ENCODE measurements at regions of chr10 and their contacts with region 1.

Region 1: DNA sequence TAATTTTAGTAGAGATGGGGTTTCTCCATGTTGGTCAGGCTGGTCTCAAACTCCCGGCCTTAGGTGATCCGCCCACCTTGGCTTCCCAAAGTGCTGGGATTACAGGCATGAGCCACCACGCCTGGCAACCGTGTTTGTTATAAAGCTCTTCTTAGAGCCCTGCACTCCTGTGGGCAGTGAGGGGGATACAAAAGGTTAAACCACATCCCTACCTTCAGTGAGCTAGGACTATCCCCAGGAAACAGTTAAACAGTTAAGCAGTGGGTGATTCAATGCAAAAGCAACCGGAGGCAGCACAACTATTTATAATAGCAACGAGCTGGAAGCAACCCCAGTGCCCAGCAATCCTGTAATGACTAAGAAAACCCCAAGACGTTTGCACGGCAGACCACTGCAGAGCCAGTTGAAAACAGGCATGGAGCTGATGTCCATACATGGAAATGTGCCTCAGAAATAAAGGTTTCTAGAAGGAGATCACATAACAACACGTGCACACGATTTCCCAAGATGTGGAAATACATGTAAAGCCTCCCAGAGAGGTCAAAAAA is 107.2 kb upstream of the LYZL2 start:
- DNase-seq: peak; percentile 69
- H3K4me3 Mint-ChIP-seq: no peak overlapping the region
- H3K27ac Mint-ChIP-seq: peak overlapping the region; percentile 56
- H3K4me1 Mint-ChIP-seq: peaks cover 17% of the 10 kb centered on the region
- H3K27me3 Mint-ChIP-seq: peaks cover 9% of the 10 kb centered on the region

Region 2: DNA sequence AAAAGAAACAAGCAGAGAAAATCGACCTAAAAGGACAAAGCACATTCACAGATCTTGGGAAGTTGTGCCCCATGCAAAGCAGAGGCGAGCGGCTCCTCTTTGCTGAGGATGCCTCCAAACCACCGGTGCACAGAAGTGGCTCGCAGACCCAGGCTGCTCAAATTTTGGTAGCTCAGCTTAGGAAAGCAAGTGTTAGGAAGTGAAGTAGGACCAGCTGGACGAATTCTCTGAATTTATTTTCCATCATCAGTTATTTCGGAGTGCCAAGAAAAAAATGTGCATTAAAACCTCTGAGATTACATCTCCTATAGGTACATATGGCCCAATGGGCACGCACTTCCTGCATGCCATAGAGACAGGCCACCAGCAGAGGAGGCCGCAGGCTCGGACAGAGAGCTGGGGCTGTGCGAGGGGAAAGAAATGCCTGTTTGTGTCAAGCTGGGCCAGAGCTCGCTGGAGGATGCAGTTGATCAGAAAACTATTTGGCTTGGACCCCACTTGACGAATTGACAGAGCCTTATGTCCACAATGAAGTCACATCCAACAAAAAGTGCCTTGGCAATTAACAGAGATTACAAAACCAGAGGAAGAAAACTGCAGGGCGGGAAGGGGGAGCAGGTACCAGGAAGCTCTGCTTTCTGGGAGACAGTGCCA is 15.0 kb after region 1 on chr10:
- CTCF ChIA-PET with region 1: interaction called, 4 read pairs
- POLR2A ChIA-PET with region 1: no interaction called
- intact Hi-C with region 1: loop called (anchors 2 kb)
- DNase-seq: peak; percentile 77
- H3K4me3 Mint-ChIP-seq: no peak overlapping the region
- H3K27ac Mint-ChIP-seq: peak overlapping the region; percentile 24
- H3K4me1 Mint-ChIP-seq: peaks cover 41% of the 10 kb centered on the region
- H3K27me3 Mint-ChIP-seq: peaks cover 3% of the 10 kb centered on the region